ENCODE measurements at regions of chr11 and their contacts with region 1.

Region 1: GRCh38 chr11:47269002-47269828 is 718 bp upstream of the MADD start:
- DNase-seq: peak; percentile 93 to 94 (median 94)
- ATAC-seq: peak; percentile 88 to 94 (median 90)
- H3K4me3 ChIP-seq: peak overlapping the region; percentile 66 to 79 (median 77)
- H3K27ac ChIP-seq: peak overlapping the region; percentile 93 to 96 (median 95)
- H3K4me1 ChIP-seq: peaks cover 0 to 17% (median 7%) of the 10 kb centered on the region in 4 donors
- H3K27me3 ChIP-seq: no peaks in the 10 kb centered on the region
- CTCF ChIP-seq: peak in 1 of 4 donors; percentile 11
- POLR2A ChIP-seq: no peak

Region 2: GRCh38 chr11:47171856-47172255 is 97.4 kb before region 1 on chr11:
- intact Hi-C with region 1: loop called in 1 of 2 experiments (anchors 5 kb)
- DNase-seq: no peak
- ATAC-seq: no peak
- H3K4me3 ChIP-seq: no peak overlapping the region
- H3K27ac ChIP-seq: no peak overlapping the region
- H3K4me1 ChIP-seq: peaks cover 0 to 49% (median 4%) of the 10 kb centered on the region in 4 donors
- H3K27me3 ChIP-seq: no peaks in the 10 kb centered on the region
- CTCF ChIP-seq: no peak
- POLR2A ChIP-seq: no peak

Region 3: DNA sequence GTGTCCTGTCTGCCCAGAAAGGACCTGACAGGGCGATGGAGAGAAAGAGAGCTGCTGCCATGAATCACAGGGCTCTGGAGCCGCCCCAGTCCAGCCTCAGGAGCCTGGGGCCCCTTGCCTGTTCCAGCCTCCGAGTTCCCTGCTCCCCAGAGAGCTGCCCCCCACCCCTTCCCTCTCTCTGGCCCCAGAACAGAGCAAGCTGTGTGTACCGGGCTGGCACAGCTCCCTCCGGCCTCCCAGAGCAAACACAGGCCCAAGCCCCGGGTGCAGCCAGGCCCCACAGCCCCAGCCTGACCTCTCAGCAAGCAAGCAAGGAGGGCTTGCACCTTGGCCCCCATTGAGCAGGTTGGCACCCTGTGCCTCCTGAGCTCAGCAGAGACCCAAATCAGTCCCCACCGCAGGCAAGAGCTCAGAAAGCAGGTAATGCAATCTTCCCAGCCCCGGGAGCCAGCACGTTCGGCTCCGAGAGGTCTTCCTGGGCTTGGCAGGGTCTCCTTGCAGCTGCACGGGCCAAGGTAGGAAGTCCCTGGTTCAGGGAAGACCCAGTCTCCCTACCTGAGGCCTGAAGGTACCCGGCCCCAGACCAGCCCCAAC is 84.4 kb before region 1 on chr11:
- intact Hi-C with region 1: loop called in 1 of 2 experiments (anchors 5 kb)
- DNase-seq: peak; percentile 54 to 95 (median 88)
- ATAC-seq: peak; percentile 24 to 63 (median 60)
- H3K4me3 ChIP-seq: peak overlapping the region; percentile 58 to 74 (median 74)
- H3K27ac ChIP-seq: peak overlapping the region in 2 of 3 donors; percentile 67 to 76
- H3K4me1 ChIP-seq: peaks cover 0 to 50% (median 22%) of the 10 kb centered on the region in 4 donors
- H3K27me3 ChIP-seq: no peaks in the 10 kb centered on the region
- CTCF ChIP-seq: no peak
- POLR2A ChIP-seq: no peak

Region 4: DNA sequence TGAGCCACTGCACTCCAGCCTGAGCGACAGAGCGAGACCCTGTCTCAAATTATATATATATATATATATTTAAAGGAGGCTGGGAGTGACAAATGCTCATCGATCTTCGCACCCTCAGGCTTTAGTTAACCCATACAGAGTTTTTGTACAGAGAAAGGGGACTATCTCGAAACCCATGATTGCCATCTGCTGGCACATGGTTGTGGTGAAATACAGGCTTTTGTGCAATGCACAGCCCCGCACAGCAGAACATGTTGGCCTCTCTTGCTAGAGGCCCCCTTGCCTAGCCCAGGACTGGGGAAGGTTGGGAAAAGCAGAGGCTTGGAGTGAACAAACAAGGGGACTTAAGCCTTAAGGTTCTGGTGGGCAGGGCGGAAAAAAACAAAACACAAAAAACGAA is 79.6 kb after region 1 on chr11:
- intact Hi-C with region 1: loop called (anchors 10 kb)
- DNase-seq: peak in 1 of 3 donors; percentile 44
- ATAC-seq: peak in 3 of 4 donors; percentile 39 to 61 (median 46)
- H3K4me3 ChIP-seq: no peak overlapping the region
- H3K27ac ChIP-seq: no peak overlapping the region
- H3K4me1 ChIP-seq: no peaks in the 10 kb centered on the region
- H3K27me3 ChIP-seq: no peaks in the 10 kb centered on the region
- CTCF ChIP-seq: peak in 3 of 4 donors; percentile 10 to 29 (median 15)
- POLR2A ChIP-seq: no peak

Region 5: GRCh38 chr11:47355283-47356128 is 86.3 kb after region 1 on chr11:
- intact Hi-C with region 1: loop called in 1 of 2 experiments (anchors 10 kb)
- DNase-seq: peak; percentile 93 to 95 (median 95)
- ATAC-seq: peak; percentile 93 to 98 (median 96)
- H3K4me3 ChIP-seq: peak overlapping the region; percentile 27 to 59 (median 52)
- H3K27ac ChIP-seq: peak overlapping the region; percentile 14 to 59 (median 42)
- H3K4me1 ChIP-seq: no peaks in the 10 kb centered on the region
- H3K27me3 ChIP-seq: no peaks in the 10 kb centered on the region
- CTCF ChIP-seq: peak; percentile 93 to 97 (median 94)
- POLR2A ChIP-seq: no peak

Measured in right lobe of liver (tissue), 6 donors.